Motor neuron (in vitro differentiated cells): ENCODE measurements at regions of chr3 and their contacts with region 1.

Region 1: GRCh38 chr3:194134757-194135528 is 1.0 kb upstream of the HES1 start:
- ATAC-seq: peak; percentile 32 to 79 (median 70)
- H3K4me3 ChIP-seq: peak overlapping the region; percentile 35 to 57 (median 50)
- H3K27ac ChIP-seq: peak overlapping the region; percentile 69 to 92
- H3K4me1 ChIP-seq: peaks cover 42 to 48% of the 10 kb centered on the region in 2 donors

Region 2: GRCh38 chr3:193665370-193665989 is 469.5 kb before region 1 on chr3:
- in situ Hi-C with region 1: loop called in 1 of 9 experiments (anchors 25 kb)
- ATAC-seq: no peak
- H3K4me3 ChIP-seq: no peak overlapping the region
- H3K27ac ChIP-seq: no peak overlapping the region
- H3K4me1 ChIP-seq: no peaks in the 10 kb centered on the region